Aorta (tissue), 5 donors: ENCODE measurements at regions of chr1 and their contacts with region 1.

Region 1: GRCh38 chr1:204363335-204364124 is 3.8 kb upstream of the PLEKHA6 start:
- DNase-seq: peak; percentile 77 to 86
- ATAC-seq: peak; percentile 85
- H3K4me3 ChIP-seq: peak overlapping the region; percentile 36 to 49
- H3K27ac ChIP-seq: no peak overlapping the region
- H3K4me1 ChIP-seq: no peaks in the 10 kb centered on the region
- H3K27me3 ChIP-seq: no peaks in the 10 kb centered on the region

Region 2: GRCh38 chr1:204213668-204214662 is 149.6 kb before region 1 on chr1 and contains the start of gene GOLT1A:
- intact Hi-C with region 1: loop called (anchors 2 to 5 kb)
- DNase-seq: peak; percentile 69 to 82
- ATAC-seq: peak; percentile 68
- H3K4me3 ChIP-seq: no peak within 1 kb of the TSS
- H3K27ac ChIP-seq: no peak within 1 kb of the TSS
- H3K4me1 ChIP-seq: no peaks in the 10 kb centered on the region
- H3K27me3 ChIP-seq: no peaks in the 10 kb centered on the region
- total RNA-seq, gene GOLT1A: not detected

Region 3: DNA sequence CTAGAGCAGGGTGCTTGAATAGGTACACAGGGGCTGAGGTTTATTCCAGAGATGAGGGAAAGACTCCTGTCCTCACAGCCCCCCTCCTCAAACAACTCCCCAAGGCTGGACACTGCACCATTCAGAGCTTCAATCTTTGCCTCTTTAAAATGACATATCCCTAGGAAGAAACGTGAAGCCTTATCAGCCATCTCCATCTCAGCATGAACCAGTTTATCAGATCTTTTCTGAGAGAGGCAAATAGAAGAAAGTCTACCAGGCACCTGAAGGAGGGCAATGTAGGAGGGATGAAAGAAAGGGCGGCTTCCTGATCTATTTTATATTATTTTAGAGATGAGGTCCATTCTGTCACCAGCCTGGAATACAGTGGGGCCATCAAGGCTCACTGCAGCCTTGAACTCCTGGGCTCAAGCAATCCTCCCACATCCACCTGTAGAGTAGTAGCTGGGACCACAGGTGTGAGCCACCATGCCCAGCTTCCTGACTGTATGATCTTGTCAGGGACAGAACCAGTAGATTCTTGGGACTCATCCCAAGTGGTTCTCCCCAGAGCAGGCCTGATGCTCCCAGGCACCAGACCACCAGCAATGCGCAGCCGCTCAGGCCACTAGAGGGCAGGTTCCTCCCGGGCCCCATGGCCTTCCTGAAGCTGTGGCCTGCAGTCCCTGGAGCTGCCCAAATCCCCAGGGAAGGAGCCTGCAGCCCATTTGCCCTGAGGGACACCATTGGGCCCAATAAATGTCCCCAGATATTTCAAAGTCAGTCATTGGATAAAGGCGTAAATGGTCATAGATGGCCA is 105.4 kb before region 1 on chr1:
- intact Hi-C with region 1: loop called in 1 of 2 experiments (anchors 2 kb)
- DNase-seq: peak; percentile 65 to 80
- ATAC-seq: no peak
- H3K4me3 ChIP-seq: no peak overlapping the region
- H3K27ac ChIP-seq: no peak overlapping the region
- H3K4me1 ChIP-seq: no peaks in the 10 kb centered on the region
- H3K27me3 ChIP-seq: no peaks in the 10 kb centered on the region

Region 4: DNA sequence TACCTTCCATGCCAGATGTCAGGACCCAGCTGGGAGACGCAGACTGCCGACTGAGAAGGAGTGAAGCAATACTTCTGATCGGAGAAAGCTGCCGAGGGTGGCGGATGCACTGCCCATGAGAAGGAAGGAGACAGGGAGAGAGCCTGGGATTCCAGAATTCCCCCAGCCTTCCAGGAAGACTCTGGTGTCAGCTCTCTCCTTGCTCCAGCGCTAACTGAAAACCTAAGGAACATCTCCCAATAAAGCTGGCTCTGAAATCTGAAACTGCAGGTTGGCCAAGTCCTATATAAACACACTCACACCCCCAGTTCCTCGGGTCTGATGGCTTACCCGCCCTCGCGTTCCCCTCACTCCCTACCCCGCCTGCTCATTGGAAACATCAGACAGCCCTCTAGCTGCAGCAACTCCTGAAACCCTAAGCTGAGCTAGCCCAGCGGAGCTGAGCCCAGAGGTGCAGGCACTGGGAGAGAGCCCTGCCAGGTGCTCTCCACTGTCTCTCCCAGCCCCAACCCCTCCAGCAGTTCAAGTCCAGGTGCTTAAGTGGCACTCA is 56.1 kb before region 1 on chr1:
- intact Hi-C with region 1: no loop called
- DNase-seq: no peak
- ATAC-seq: peak; percentile 78
- H3K4me3 ChIP-seq: no peak overlapping the region
- H3K27ac ChIP-seq: no peak overlapping the region
- H3K4me1 ChIP-seq: no peaks in the 10 kb centered on the region
- H3K27me3 ChIP-seq: no peaks in the 10 kb centered on the region

Region 5: GRCh38 chr1:204390751-204391466 is 27.4 kb after region 1 on chr1:
- intact Hi-C with region 1: no loop called
- DNase-seq: no peak
- ATAC-seq: no peak
- H3K4me3 ChIP-seq: no peak overlapping the region
- H3K27ac ChIP-seq: no peak overlapping the region
- H3K4me1 ChIP-seq: no peaks in the 10 kb centered on the region
- H3K27me3 ChIP-seq: no peaks in the 10 kb centered on the region

Region 6: GRCh38 chr1:204411451-204412204 is 48.1 kb after region 1 on chr1 and contains the start of gene PPP1R15B:
- intact Hi-C with region 1: no loop called
- DNase-seq: peak; percentile 98 to 99
- ATAC-seq: peak; percentile 98
- H3K4me3 ChIP-seq: peak within 1 kb of the TSS; percentile 55 to 58
- H3K27ac ChIP-seq: peak within 1 kb of the TSS; percentile 70 to 97
- H3K4me1 ChIP-seq: peaks cover 0 to 4% of the 10 kb centered on the region in 2 donors
- H3K27me3 ChIP-seq: no peaks in the 10 kb centered on the region
- total RNA-seq, gene PPP1R15B: 39.3 to 59.9 TPM